Esophagus muscularis mucosa (tissue), 4 donors: ENCODE measurements at regions of chr1 and their contacts with region 1.

Region 1: DNA sequence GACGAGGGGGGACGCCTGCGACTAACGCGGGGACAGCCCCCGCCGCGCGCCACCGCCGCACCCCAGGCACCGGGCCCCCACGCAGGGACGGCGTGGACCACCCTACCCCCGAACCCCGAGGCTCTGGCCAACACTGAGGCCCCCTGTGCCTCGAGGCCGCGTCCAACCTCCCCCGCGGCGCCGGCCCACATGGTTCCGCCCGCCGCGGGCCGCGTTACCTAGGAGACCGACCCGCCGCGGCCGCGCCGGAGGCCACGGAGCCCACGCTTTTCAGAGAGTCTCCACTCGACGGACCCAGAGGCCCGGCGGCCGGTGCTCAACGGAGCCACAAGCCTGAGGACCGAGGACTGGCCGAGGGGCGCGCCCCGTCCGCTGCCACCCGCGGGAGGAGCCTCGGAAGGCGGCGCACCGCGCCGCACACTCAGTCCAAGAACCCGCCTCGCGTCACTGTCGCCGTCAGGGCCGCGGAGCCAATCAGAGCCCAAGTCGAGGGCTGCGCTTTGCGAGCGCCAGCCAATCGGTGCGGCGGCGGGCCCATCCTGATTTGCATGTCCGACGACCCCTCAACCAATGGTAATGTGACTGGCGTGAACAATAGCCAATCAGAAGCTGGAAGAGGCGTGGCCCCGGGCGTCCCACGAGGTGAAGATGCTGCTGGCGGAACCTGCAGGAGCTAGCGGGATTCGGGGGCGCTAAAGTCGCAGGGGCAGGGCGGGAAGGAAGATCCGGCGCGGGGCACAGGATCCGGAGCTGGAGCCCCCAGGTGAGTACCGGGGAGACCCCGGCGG is at the start of gene NPHP4:
- DNase-seq: peak; percentile 100
- H3K4me3 ChIP-seq: peak within 1 kb of the TSS; percentile 62 to 97 (median 72)
- H3K27ac ChIP-seq: peak within 1 kb of the TSS; percentile 88 to 97 (median 90)
- H3K4me1 ChIP-seq: peaks cover 15 to 43% (median 25%) of the 10 kb centered on the region in 4 donors
- H3K27me3 ChIP-seq: no peaks in the 10 kb centered on the region
- CTCF ChIP-seq: no peak
- EP300 ChIP-seq: no peak
- POLR2A ChIP-seq: no peak
- total RNA-seq, gene NPHP4: 6.5 to 9.1 (median 8.0) TPM

Region 2: DNA sequence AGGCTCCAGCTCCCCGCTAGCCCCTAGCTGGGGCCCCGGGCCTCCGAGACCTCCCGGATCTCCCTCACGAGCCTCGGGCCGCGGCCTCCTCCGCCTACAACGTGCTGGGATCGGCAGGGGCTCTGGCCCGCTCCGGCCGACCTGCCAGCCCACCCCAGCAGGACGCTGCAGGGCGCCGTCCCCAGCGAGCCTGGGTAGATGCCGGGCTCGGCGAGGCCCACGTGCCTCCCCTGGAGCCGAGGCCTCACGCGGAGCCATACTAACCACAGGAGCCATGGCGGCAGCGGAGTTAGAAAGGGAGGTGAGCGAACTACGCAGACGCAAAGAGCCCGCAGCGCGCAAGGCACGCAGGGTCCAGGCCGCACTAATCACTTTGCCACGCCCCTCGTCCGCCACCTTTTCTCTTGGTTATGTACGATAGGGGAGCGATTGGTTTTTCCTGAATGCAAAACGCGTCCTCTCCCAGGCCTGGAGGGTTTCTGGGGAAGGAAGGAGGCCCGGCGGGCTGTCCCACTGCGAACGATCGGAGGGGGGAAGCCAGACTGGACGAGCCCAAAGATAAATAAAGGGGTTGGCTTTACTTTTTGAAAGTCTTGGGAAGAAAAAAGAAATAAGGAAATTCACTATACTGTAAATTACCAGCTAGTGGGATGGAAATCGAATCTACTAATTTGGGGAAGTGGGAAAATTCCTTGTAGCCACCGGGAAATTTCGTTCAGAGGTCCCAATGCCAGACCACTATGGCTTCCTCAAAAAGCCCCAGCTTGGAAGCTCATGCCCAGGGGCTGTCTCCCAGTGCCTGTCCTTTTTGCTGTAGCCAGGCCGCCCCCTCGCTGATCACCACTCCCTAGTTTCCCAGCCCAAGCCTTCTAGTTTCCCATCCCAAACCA is 207.3 kb after region 1 on chr1 and contains the start of gene RPL22:
- intact Hi-C with region 1: loop called (anchors 10 kb)
- DNase-seq: peak; percentile 99
- H3K4me3 ChIP-seq: peak within 1 kb of the TSS; percentile 81 to 99 (median 94)
- H3K27ac ChIP-seq: peak within 1 kb of the TSS; percentile 75 to 88 (median 84)
- H3K4me1 ChIP-seq: peaks cover 27 to 48% (median 37%) of the 10 kb centered on the region in 4 donors
- H3K27me3 ChIP-seq: no peaks in the 10 kb centered on the region
- CTCF ChIP-seq: peak in 1 of 3 experiments; percentile 55
- EP300 ChIP-seq: no peak
- POLR2A ChIP-seq: peak; percentile 67
- total RNA-seq, gene RPL22: 150 to 225 (median 218) TPM